Activated T-helper 1 cell treated with anti-CD3 and anti-CD28 coated beads, Interleukin-12 subunit alpha, Interleukin-12 subunit beta, Interleukin-2, Interleukin-4 antibody, amounts not matched to agents 30 ng/mL and 10 ng/mL and 1 ng/mL, durations not matched to agents 14 hours and 24 hours and 36 hours (primary cell): ENCODE measurements at regions of chr12 and their contacts with region 1.

Region 1: DNA sequence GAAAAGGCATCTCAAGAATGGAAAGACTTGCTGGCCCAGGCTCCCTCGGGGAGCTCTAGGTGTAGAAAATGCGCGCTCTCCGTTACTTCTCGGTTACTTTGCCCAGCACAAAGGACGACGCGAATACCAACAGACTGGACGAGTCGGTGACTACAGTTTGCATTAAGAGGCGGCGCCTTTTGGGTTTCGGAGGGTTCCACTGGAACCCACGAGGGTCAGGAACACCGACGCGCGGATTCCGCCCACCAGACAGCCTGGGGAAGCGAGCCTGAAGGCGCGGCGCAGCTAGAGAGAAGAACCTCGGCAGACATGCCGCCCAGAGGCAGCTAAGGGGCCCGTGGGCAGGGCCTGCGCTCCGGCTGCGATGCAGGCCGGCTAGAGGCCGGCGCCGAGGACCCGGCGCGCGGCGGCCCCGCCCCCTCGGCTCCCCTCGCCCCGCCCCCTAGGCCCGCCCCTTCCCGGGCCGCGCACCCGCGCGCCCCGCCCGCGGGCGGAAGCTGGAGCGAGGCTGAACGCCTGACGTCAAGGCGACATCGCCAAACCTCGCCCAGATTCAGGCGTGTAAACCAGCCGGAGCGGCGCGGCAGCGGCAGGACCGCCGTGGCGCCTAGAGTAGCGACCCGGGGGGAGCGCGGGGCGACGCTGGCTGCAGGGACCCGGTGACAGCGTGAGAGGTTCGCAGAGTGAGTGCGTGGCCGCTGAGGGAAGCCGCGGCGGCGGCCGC is at the start of gene RAP1B:
- DNase-seq: peak; percentile 89
- H3K4me3 Mint-ChIP-seq: peak within 1 kb of the TSS; percentile 96
- H3K27ac Mint-ChIP-seq: peak within 1 kb of the TSS; percentile 96
- H3K4me1 Mint-ChIP-seq: peaks cover 52% of the 10 kb centered on the region
- H3K27me3 Mint-ChIP-seq: no peaks in the 10 kb centered on the region
- total RNA-seq, gene RAP1B: 244 and 263 TPM in 2 replicates

Region 2: GRCh38 chr12:68223083-68223747 is 387.3 kb before region 1 on chr12:
- intact Hi-C with region 1: loop called (anchors 5 kb)
- DNase-seq: peak; percentile 68
- H3K4me3 Mint-ChIP-seq: peak overlapping the region; percentile 79
- H3K27ac Mint-ChIP-seq: peak overlapping the region; percentile 61
- H3K4me1 Mint-ChIP-seq: peaks cover 56% of the 10 kb centered on the region
- H3K27me3 Mint-ChIP-seq: no peaks in the 10 kb centered on the region

Region 3: GRCh38 chr12:68358532-68359485 is 251.7 kb before region 1 on chr12:
- intact Hi-C with region 1: loop called (anchors 1 kb)
- DNase-seq: peak; percentile 60
- H3K4me3 Mint-ChIP-seq: no peak overlapping the region
- H3K27ac Mint-ChIP-seq: no peak overlapping the region
- H3K4me1 Mint-ChIP-seq: peaks cover 36% of the 10 kb centered on the region
- H3K27me3 Mint-ChIP-seq: no peaks in the 10 kb centered on the region

Region 4: DNA sequence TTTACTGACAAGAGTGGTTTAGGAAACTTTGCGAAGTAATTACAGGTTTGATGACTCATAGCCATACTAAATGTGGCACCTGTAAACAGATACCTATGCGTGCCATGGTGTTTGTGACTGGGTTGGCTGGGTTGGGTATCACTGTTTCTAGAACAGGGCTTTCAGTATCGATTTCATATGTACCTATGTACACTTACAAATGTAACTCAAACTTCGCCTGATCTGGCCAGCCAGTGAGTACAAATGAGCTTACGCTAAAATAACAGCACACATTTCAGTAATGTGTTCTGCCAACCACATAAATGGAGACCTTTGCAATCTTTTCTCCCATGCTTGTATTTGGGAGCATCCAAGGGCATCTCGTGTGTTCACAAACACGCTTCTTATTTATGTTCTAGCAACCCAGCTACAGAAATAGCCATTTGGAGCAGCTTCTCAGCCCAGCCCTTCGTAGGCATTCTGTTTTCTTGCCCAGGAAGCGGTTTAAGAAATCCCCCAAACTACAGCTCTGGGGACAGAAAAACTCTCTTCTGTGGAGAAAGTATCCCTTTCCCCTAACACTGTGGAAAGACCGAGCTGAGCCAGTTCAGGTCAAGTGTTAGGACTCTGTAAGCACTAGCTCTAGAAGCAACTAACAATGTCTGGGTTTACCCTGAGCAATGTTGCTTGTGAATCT is 236.1 kb before region 1 on chr12:
- intact Hi-C with region 1: loop called (anchors 1 kb)
- DNase-seq: peak; percentile 60
- H3K4me3 Mint-ChIP-seq: peak overlapping the region; percentile 31
- H3K27ac Mint-ChIP-seq: peak overlapping the region; percentile 93
- H3K4me1 Mint-ChIP-seq: peaks cover 68% of the 10 kb centered on the region
- H3K27me3 Mint-ChIP-seq: no peaks in the 10 kb centered on the region

Region 5: DNA sequence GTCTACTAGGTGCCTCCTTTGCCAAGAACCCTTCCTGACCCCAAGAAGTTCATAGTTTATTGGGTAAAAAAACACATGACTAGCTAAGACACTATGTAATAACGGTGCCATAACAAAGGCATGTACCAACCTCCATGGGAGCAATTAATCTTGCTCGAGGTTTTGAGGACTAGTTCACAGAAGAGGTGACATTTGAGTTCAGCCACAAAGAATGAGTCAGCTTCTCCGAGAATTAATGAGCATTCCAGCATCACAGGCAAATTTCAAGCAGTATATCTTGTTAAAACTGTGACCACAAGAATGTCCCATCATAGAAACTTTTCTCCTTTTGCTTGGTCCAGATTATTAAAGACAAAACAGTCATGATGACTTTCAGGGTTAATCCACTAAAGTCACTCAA is 112.8 kb before region 1 on chr12:
- intact Hi-C with region 1: loop called (anchors 1 kb)
- DNase-seq: no peak
- H3K4me3 Mint-ChIP-seq: peak overlapping the region; percentile 66
- H3K27ac Mint-ChIP-seq: peak overlapping the region; percentile 94
- H3K4me1 Mint-ChIP-seq: peaks cover 40% of the 10 kb centered on the region
- H3K27me3 Mint-ChIP-seq: no peaks in the 10 kb centered on the region

Region 6: DNA sequence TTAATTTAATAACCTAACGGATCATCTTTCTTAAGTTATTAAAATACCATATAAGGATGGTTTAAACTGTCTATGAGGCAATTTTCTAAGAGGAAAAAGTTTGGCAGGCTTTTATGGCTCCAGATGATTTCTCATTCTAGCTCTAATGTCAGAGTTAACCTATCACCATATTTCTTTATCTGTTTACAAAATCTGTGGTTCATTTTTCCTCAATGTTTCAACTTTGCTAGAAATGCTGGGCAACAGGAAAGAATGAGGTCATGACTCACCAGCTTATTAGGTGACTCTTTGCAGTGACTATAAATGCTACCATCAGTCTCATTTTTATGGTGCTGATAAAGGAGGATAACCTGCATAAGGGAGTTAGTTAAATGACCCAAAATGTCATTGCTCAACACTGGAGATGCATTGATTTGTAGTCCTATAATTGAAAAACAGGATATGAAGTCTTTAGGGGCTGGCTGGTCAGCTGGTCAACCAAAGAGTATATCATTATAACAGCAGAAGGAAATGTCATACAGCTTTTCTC is 45.1 kb before region 1 on chr12:
- intact Hi-C with region 1: loop called (anchors 1 kb)
- DNase-seq: no peak
- H3K4me3 Mint-ChIP-seq: peak overlapping the region; percentile 1
- H3K27ac Mint-ChIP-seq: no peak overlapping the region
- H3K4me1 Mint-ChIP-seq: peaks cover 24% of the 10 kb centered on the region
- H3K27me3 Mint-ChIP-seq: no peaks in the 10 kb centered on the region

Region 7: DNA sequence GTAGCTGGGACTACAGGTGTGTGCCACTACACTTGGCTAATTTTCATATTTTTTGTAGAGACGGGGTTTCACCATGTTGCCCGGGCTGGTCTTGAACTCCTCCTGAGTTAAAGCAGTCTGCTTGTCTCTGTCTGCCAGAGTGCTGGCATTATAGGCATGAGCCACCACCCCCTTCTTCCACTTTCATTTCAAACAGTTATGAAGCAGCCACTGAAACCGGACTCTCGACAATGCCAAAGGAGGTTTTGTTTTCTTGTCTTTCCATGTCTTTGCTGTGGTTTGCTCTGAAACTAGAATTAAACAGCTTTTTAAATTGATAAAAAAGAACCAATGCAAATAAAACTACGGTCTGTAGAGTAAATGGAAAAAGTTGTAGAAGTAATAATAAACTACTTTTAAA is 30.6 kb after region 1 on chr12:
- intact Hi-C with region 1: loop called (anchors 1 kb)
- DNase-seq: peak; percentile 36
- H3K4me3 Mint-ChIP-seq: peak overlapping the region; percentile 61
- H3K27ac Mint-ChIP-seq: peak overlapping the region; percentile 71
- H3K4me1 Mint-ChIP-seq: peaks cover 63% of the 10 kb centered on the region
- H3K27me3 Mint-ChIP-seq: no peaks in the 10 kb centered on the region